AG04450 (cell line): ENCODE measurements at regions of chr19 and their contacts with region 1.

Region 1: GRCh38 chr19:49097455-49098288 is 12.4 kb downstream of the SNRNP70 start:
- DNase-seq: peak; percentile 53
- H3K4me3 ChIP-seq: no peak overlapping the region
- H3K27ac ChIP-seq: no peak overlapping the region
- H3K27me3 ChIP-seq: no peaks in the 10 kb centered on the region
- CTCF ChIP-seq: peak; percentile 99

Region 2: GRCh38 chr19:49064768-49065611 is 32.7 kb before region 1 on chr19 and contains the start of gene NTF4:
- CTCF ChIA-PET with region 1: interaction called, 15 read pairs
- POLR2A ChIA-PET with region 1: no interaction called
- DNase-seq: no peak
- H3K4me3 ChIP-seq: peak within 1 kb of the TSS; percentile 45
- H3K27ac ChIP-seq: no peak within 1 kb of the TSS
- H3K27me3 ChIP-seq: peaks cover 26% of the 10 kb centered on the region
- CTCF ChIP-seq: no peak
- polyA plus RNA-seq, gene NTF4: 0.09 and 0.30 TPM in 2 replicates

Region 3: GRCh38 chr19:49118565-49119410 is 21.1 kb after region 1 on chr19 and contains the start of gene C19orf73:
- CTCF ChIA-PET with region 1: interaction called, 24 read pairs
- POLR2A ChIA-PET with region 1: interaction called, 7 read pairs
- DNase-seq: peak; percentile 81
- H3K4me3 ChIP-seq: peak within 1 kb of the TSS; percentile 73
- H3K27ac ChIP-seq: peak within 1 kb of the TSS; percentile 77
- H3K27me3 ChIP-seq: peaks cover 2% of the 10 kb centered on the region
- CTCF ChIP-seq: peak; percentile 10; the same call in 1 of the 2 replicates
- polyA plus RNA-seq, gene C19orf73: 0.36 and 0.50 TPM in 2 replicates

Region 4: DNA sequence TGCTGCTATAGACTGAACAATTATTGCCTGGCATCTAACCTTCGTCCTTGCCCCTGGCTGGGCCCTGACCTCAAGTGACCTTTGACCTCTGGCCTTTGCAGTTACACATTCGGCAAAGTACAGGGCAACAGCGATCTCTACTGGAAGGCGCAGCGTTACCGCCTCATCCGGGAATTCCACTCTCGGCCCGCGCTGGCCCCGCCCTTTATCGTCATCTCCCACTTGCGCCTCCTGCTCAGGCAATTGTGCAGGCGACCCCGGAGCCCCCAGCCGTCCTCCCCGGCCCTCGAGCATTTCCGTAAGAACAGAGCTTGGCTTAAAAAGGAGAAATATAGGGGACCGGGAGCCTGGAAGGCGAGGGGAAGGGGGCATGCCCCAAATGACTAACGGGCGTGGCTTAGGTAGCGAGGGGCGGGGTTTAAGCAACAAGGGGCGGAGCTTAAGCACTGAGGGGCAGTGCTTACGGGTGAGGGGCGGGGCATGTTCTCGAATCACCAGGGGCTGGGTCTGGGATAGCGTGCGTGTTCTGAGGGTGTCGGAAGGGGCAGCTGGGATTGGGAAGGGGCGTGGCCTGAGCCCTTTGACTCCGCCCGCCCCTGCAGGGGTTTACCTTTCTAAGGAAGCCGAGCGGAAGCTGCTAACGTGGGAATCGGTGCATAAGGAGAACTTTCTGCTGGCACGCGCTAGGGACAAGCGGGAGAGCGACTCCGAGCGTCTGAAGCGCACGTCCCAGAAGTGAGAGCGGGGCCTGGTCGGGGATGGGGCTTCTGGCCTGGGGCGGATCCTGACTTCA is 112.6 kb after region 1 on chr19:
- CTCF ChIA-PET with region 1: interaction called, 18 read pairs
- POLR2A ChIA-PET with region 1: interaction called, 3 read pairs
- DNase-seq: no peak
- H3K4me3 ChIP-seq: no peak overlapping the region
- H3K27ac ChIP-seq: no peak overlapping the region
- H3K27me3 ChIP-seq: no peaks in the 10 kb centered on the region
- CTCF ChIP-seq: no peak